ENCODE measurements at regions of chr1 and their contacts with region 1.

Region 1: DNA sequence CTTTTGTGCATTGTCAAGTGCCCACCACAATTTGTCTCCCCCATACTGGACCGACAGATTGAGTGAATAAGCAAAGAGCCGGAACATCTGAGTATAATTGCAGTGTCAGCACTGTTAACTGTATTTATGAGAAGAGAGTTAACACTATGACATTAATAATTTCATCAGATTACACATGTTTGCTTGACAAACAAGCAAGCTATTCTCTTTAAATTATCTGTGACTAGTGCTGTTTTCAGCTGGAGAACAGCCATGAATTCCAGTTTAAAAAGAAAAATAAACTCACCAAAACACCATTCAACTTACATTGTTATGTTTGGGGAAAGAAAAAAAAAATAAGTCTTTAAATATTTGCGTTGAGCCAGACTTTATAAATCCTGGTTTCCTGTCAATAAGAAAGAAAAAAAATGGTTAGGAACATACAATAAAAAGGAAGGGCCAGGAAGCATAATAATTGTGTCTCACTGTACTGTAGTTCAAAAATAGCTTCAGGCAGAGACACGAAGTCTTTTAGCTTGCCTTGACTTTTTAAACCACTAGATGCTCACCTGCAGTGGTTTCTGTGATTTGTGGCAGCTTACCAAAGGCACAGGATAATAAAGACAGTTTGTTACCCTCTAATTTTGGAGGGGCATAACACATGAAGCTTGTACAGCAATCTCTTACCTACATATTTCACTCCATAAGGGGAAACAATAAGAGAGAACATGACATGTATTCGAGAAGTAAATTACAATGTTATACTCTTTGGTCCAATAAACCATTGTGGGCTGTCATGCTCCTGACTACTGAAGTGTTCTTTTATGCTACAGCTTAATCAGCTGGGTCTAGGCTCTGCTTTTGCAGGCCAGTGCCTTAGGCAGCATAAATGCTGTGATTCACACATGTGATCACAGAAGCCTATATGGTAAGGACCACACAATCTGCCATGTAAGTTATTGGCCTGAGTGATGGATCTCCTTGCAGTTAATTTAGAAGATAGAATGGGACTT is 302.0 kb upstream of the ADGRL2 start:
- DNase-seq: no peak
- ATAC-seq: peak in 4 of 8 donors; percentile 63 to 82 (median 67)
- H3K4me3 ChIP-seq: no peak overlapping the region
- H3K27ac ChIP-seq: peak overlapping the region in 5 of 10 donors; percentile 11 to 54 (median 44)
- H3K4me1 ChIP-seq: peaks cover 3 to 30% (median 23%) of the 10 kb centered on the region in 9 donors
- H3K27me3 ChIP-seq: no peaks in the 10 kb centered on the region
- CTCF ChIP-seq: no peak

Region 2: GRCh38 chr1:81379430-81379829 is 119.3 kb before region 1 on chr1:
- intact Hi-C with region 1: no loop called
- DNase-seq: no peak
- ATAC-seq: peak in 1 of 8 donors; percentile 45
- H3K4me3 ChIP-seq: no peak overlapping the region
- H3K27ac ChIP-seq: no peak overlapping the region
- H3K4me1 ChIP-seq: peaks cover 0 to 4% (median 0%) of the 10 kb centered on the region in 9 donors
- H3K27me3 ChIP-seq: no peaks in the 10 kb centered on the region
- CTCF ChIP-seq: no peak

Region 3: GRCh38 chr1:81437649-81438048 is 61.1 kb before region 1 on chr1:
- intact Hi-C with region 1: loop called in 1 of 10 experiments (anchors 10 kb)
- DNase-seq: no peak
- ATAC-seq: peak in 3 of 8 donors; percentile 11 to 67 (median 31)
- H3K4me3 ChIP-seq: no peak overlapping the region
- H3K27ac ChIP-seq: peak overlapping the region in 7 of 10 donors; percentile 24 to 60 (median 41)
- H3K4me1 ChIP-seq: peaks cover 0 to 38% (median 20%) of the 10 kb centered on the region in 9 donors
- H3K27me3 ChIP-seq: no peaks in the 10 kb centered on the region
- CTCF ChIP-seq: no peak

Measured in heart right ventricle (tissue), 16 donors.